GM10248 (cell line): ENCODE measurements at regions of chr20 and their contacts with region 1.

Region 1: DNA sequence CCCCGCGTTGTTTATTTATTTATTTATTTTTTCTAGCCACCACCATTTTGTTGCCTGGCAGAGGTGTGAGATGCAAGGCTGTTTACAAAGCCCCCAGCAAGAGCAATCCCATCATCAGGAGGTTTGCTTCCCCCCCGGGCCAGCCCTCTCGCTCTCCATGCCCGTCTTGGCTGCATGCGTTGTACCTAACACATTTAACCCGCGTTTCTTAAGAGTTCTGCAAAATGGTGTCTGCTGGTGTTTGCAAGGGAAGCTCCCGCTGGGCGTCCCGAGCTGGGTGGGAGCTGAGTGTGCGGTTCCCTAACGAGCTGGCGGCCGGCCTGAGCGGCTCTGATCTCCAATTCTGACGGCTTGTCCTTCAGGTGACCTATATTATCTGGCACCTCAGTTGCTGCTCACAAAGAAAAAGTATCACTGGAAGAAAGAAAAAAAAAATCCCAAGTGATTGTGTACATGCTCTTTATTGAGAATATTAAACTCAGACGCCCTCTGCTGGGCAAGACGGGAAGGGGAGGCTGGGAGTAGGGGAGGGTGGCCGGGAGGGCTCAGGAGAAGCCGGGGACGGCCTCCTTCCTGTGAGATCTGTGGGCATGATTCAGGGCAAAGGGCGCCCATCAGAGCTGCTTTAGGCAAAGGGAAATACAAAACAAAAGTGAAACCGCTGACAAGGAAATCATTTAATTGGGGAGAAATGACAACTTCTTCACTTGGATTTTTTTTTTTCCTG is 154.8 kb downstream of the BCAS1 start:
- DNase-seq: peak; percentile 81
- CTCF ChIP-seq: peak; percentile 70

Region 2: GRCh38 chr20:52959125-52959524 is 956.5 kb before region 1 on chr20:
- CTCF ChIA-PET with region 1: no interaction called
- POLR2A ChIA-PET with region 1: no interaction called
- DNase-seq: no peak
- CTCF ChIP-seq: no peak

Region 3: DNA sequence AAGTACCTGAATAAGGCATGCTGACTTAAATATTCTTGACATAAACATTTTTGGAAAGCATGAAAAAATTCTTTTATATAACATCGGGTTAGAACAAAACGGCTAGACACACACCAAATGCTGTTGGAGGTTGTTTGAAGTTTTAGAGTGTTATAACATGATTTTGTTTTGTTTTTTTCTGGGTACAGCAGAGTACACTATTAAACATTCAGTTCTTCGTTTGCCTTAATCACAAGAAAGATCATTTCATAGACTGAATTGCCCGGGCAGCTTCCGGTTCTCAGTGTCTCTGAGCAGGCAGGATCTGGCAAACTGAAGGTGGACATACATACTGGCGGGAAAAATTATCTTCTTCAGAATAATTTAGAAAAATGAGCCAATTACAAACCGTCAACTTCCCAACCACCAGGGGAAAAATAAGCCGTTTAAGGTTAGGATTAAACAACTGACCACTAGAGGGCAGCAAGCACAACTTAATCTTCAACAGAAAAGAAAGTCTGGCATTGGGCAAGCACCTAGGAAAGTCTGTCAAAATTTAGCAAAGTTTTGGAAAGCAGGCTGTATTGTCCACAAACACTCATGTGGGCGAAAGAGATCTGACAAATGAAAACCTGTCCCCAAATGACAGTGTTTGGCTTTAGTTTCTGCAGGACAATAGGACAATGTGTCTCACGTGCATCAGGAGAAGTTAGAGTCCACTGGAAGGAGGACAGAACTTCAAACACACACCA is 337.0 kb before region 1 on chr20:
- CTCF ChIA-PET with region 1: interaction called, 20 read pairs
- POLR2A ChIA-PET with region 1: no interaction called
- DNase-seq: peak; percentile 72
- CTCF ChIP-seq: peak; percentile 67

Region 4: DNA sequence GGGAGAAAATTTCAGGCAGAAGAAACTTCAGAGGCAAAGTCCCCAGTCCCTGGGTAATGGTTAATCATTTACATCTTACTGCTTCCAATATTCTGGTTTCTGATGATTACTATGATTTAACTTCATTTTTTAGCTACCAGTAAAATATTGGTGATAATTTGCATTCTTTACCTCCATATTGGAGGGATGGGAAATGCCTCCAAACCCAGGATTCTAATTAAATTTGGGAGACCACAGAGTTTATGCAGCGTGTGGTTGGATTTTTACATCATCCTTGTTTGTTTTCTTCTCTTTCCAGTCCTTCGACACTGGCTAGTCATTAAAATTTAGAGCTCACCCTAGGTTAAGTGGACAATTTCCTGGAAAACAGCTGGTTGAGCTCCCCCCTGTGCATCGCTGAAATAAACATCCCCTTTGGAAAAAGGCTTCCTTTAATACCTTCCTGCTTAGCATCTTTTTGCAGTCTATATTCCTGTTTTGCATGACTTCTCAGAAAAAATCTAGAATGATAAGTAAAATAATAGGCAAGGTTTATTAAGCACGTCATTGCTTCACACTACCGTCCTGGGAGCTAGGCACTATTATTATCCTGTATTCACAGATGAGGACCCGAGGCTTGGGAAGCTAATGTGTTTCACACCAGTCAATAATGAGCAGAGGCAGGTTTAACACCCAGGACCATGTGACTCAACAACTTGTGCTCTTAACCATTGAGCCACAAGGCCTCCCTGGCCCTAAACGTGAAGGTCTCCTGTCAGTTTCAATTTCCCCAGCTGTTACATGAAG is 36.8 kb before region 1 on chr20:
- CTCF ChIA-PET with region 1: interaction called, 20 read pairs
- POLR2A ChIA-PET with region 1: no interaction called
- DNase-seq: no peak
- CTCF ChIP-seq: no peak

Region 5: GRCh38 chr20:53891306-53891944 is 24.2 kb before region 1 on chr20:
- CTCF ChIA-PET with region 1: interaction called, 20 read pairs
- POLR2A ChIA-PET with region 1: no interaction called
- DNase-seq: no peak
- CTCF ChIP-seq: no peak

Region 6: GRCh38 chr20:53905019-53905847 is 10.4 kb before region 1 on chr20:
- CTCF ChIA-PET with region 1: interaction called, 72 read pairs
- POLR2A ChIA-PET with region 1: interaction called, 9 read pairs
- DNase-seq: no peak
- CTCF ChIP-seq: no peak

Region 7: GRCh38 chr20:54017809-54018208 is 102.2 kb after region 1 on chr20:
- CTCF ChIA-PET with region 1: no interaction called
- POLR2A ChIA-PET with region 1: no interaction called
- DNase-seq: peak; percentile 67
- CTCF ChIP-seq: no peak

Region 8: GRCh38 chr20:54062812-54063280 is 147.2 kb after region 1 on chr20:
- CTCF ChIA-PET with region 1: interaction called, 10 read pairs
- POLR2A ChIA-PET with region 1: no interaction called
- DNase-seq: peak; percentile 55
- CTCF ChIP-seq: peak; percentile 74